Naive thymus-derived CD4-positive, alpha-beta T cell (primary cell): ENCODE measurements at regions of chr6 and their contacts with region 1.

Region 1: DNA sequence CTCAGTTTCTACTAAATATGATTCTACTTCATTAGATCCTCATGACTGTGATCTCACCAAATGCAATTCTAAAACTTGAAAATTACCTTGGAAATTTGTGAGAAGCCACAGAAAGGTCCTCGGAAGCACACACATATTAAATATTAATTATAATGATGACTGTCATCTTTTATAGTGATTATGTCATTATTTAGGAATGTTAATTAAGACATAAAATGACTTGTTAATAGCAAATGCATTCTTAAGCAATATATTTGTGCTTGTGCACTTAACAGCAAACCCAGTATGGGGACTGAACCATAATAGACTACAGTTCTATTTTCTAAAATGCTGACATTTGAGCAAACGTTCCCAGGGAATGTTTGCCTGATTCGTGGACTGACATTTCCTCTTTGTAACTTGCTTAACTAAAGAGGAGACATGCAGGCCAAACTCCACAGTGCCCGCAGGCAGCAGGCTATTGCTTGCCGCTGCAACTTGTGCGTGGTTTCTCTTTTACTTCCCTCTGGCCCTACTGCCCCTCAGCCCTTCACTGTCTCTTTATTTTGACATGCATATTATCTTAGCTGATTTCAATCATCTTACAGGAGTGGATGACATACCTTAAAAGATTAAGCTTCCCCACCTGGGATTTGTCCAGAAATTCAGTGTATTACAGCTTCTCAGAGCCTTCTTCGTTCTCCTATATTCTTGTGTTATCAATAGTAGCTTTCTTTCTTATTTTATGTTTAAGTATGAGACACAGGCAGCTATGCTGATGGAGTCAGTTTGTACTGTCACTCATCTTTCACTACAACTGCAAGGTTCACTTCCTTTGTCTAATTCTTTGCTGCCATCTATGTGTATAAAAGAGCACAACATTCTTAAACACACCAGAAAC is 141.5 kb downstream of the GMDS start:
- DNase-seq: peak in 6 of 9 donors; percentile 11 to 48 (median 30)
- ATAC-seq: peak; percentile 69
- H3K4me3 ChIP-seq: no peak overlapping the region
- H3K4me3 Mint-ChIP-seq: no peak overlapping the region
- H3K27ac ChIP-seq: no peak overlapping the region
- H3K27ac Mint-ChIP-seq: no peak overlapping the region
- H3K4me1 ChIP-seq: no peaks in the 10 kb centered on the region
- H3K4me1 Mint-ChIP-seq: peaks cover 0 to 3% (median 0%) of the 10 kb centered on the region in 7 donors
- H3K27me3 ChIP-seq: no peaks in the 10 kb centered on the region
- H3K27me3 Mint-ChIP-seq: no peaks in the 10 kb centered on the region

Region 2: GRCh38 chr6:1596088-1596852 is 507.6 kb before region 1 on chr6:
- CTCF ChIA-PET with region 1: no interaction called
- POLR2A ChIA-PET with region 1: no interaction called
- intact Hi-C with region 1: loop called in 1 of 2 experiments (anchors 2 kb)
- DNase-seq: peak in 8 of 9 donors; percentile 45 to 76 (median 63)
- ATAC-seq: peak; percentile 90
- H3K4me3 ChIP-seq: no peak overlapping the region
- H3K4me3 Mint-ChIP-seq: peak overlapping the region in 6 of 10 donors; percentile 7 to 42 (median 30)
- H3K27ac ChIP-seq: no peak overlapping the region
- H3K27ac Mint-ChIP-seq: peak overlapping the region in 1 of 9 donors; percentile 28
- H3K4me1 ChIP-seq: peaks cover 0 to 4% of the 10 kb centered on the region in 2 donors
- H3K4me1 Mint-ChIP-seq: peaks cover 4 to 9% (median 7%) of the 10 kb centered on the region in 7 donors
- H3K27me3 ChIP-seq: peaks cover 0 to 4% of the 10 kb centered on the region in 2 donors
- H3K27me3 Mint-ChIP-seq: peaks cover 59 to 68% (median 60%) of the 10 kb centered on the region in 5 donors

Region 3: DNA sequence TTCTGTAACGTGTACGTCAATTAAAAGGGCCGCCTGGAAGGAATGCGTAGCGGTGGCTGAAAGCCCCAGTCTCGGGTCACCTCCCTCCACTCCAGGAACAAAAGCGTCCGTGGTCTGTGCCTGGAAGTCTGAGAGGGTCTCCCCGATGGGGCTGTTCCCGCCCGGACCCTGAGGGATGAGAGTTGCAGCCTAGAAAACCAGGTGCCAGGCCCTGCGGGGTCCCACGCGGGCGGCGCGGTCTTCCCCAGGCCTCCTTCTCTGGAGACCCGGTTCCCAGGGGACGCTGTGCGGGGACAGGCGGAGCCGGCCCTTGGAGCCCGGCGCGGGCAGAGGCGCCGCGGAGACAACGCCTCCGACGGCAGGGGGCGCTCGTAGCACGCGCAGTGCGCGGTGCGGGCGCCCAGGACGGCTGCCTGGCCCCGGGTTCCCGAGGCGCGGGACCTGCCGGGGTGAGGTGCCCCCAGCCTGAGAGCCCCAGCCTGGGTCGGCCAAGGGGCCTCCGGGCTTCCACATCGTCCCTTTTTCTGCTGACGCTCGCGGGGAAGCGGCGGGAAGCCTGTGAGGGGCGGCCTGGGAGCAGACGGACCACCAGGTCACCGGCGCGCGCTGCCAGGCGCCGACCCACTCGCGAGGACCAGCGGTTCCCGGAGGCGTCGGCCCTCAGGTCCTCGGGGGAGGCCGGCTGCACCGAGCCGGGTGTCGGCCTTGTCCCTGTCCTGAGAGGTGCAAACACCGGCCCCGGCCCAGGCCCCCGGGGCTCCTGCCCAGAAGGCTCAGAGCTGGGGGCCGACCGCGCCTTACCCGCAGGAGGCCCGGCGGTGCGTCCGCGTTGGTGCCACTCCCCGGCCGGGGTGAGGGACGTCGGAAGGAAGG is 499.5 kb before region 1 on chr6:
- CTCF ChIA-PET with region 1: interaction called, 7 read pairs
- POLR2A ChIA-PET with region 1: no interaction called
- intact Hi-C with region 1: loop called (anchors 1 kb)
- DNase-seq: peak in 8 of 9 donors; percentile 40 to 81 (median 71)
- ATAC-seq: peak; percentile 86
- H3K4me3 ChIP-seq: no peak overlapping the region
- H3K4me3 Mint-ChIP-seq: peak overlapping the region in 5 of 10 donors; percentile 25 to 74 (median 50)
- H3K27ac ChIP-seq: no peak overlapping the region
- H3K27ac Mint-ChIP-seq: no peak overlapping the region
- H3K4me1 ChIP-seq: peaks cover 15 to 35% of the 10 kb centered on the region in 2 donors
- H3K4me1 Mint-ChIP-seq: peaks cover 22 to 41% (median 36%) of the 10 kb centered on the region in 7 donors
- H3K27me3 ChIP-seq: peaks cover 8 to 26% of the 10 kb centered on the region in 2 donors
- H3K27me3 Mint-ChIP-seq: peaks cover 77 to 84% (median 80%) of the 10 kb centered on the region in 5 donors

Region 4: DNA sequence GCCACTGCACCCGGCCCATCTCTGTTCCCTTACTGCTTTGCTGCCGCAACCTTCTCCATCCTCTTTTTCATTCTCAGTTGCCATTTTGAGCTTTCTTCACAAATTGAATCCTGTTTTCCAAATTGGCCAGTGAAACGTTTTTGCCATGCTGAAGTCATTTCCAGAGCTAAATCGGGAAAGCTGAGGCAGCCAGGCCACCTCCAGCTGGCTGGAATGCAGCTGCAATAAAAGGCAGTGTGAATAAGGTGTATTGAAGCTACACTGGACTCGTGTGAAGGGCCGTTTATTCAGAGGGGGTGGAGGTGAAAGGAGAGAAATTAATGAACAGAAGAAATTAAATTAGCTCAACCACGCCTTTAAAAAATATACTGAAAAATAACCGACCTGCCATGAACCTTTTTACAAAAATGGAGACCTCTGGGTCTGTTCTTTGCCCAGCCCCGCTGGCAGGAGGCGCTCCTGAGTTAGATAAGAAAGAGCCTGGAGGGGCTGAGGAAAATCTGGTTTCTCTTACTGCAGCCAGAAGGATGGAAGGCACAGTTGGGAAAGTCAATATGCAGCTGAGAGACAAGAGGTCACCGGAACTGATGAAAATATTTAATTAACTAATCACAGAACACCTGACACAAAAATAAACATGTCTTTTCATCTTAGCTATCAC is 210.3 kb before region 1 on chr6:
- CTCF ChIA-PET with region 1: no interaction called
- POLR2A ChIA-PET with region 1: no interaction called
- intact Hi-C with region 1: loop called in 1 of 2 experiments (anchors 1 kb)
- DNase-seq: no peak
- ATAC-seq: no peak
- H3K4me3 ChIP-seq: no peak overlapping the region
- H3K4me3 Mint-ChIP-seq: no peak overlapping the region
- H3K27ac ChIP-seq: no peak overlapping the region
- H3K27ac Mint-ChIP-seq: no peak overlapping the region
- H3K4me1 ChIP-seq: no peaks in the 10 kb centered on the region
- H3K4me1 Mint-ChIP-seq: peaks cover 0 to 4% (median 0%) of the 10 kb centered on the region in 7 donors
- H3K27me3 ChIP-seq: no peaks in the 10 kb centered on the region
- H3K27me3 Mint-ChIP-seq: no peaks in the 10 kb centered on the region

Region 5: GRCh38 chr6:2061880-2062279 is 42.0 kb before region 1 on chr6:
- CTCF ChIA-PET with region 1: no interaction called
- POLR2A ChIA-PET with region 1: no interaction called
- intact Hi-C with region 1: no loop called
- DNase-seq: no peak
- ATAC-seq: no peak
- H3K4me3 ChIP-seq: no peak overlapping the region
- H3K4me3 Mint-ChIP-seq: no peak overlapping the region
- H3K27ac ChIP-seq: no peak overlapping the region
- H3K27ac Mint-ChIP-seq: no peak overlapping the region
- H3K4me1 ChIP-seq: no peaks in the 10 kb centered on the region
- H3K4me1 Mint-ChIP-seq: peaks cover 0 to 16% (median 9%) of the 10 kb centered on the region in 7 donors
- H3K27me3 ChIP-seq: no peaks in the 10 kb centered on the region
- H3K27me3 Mint-ChIP-seq: no peaks in the 10 kb centered on the region

Region 6: DNA sequence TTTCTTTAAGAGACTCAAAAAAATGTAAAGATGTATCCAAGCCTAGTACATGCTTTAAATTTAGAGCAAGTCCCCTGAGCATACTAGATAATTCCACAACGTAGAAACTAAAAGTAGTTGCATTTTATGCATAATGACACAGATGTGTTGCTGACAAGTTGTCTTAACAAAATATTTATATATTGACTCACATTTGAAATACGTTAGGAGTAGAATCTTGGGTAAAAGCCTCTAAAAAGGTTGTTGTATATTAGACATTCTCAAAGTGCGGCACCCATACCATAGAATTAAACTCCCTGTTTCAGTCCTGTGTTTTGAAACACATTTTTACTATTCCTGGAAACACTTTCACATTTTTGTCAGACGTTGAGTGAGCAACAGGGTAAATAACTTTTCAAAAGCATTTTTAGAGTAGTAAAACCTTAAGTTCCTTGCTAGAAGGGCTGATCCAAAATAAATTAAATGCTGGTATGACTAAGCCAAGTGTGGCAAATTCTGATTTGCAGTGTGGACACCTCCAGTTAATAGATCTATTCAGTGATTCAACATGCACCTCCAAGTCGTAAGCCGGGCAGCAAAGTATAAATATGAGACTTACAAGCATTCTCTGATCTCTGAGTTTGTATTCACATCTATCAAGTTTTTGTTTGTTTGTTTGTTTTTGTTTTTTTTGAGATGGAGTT is 44.0 kb after region 1 on chr6:
- CTCF ChIA-PET with region 1: no interaction called
- POLR2A ChIA-PET with region 1: no interaction called
- intact Hi-C with region 1: no loop called
- DNase-seq: no peak
- ATAC-seq: no peak
- H3K4me3 ChIP-seq: no peak overlapping the region
- H3K4me3 Mint-ChIP-seq: no peak overlapping the region
- H3K27ac ChIP-seq: no peak overlapping the region
- H3K27ac Mint-ChIP-seq: no peak overlapping the region
- H3K4me1 ChIP-seq: no peaks in the 10 kb centered on the region
- H3K4me1 Mint-ChIP-seq: peaks cover 0 to 14% (median 10%) of the 10 kb centered on the region in 7 donors
- H3K27me3 ChIP-seq: no peaks in the 10 kb centered on the region
- H3K27me3 Mint-ChIP-seq: no peaks in the 10 kb centered on the region